Gastrocnemius medialis (tissue), 4 donors: ENCODE measurements at regions of chr2 and their contacts with region 1.

Region 1: GRCh38 chr2:159286709-159287441 is 372 bp upstream of the WDSUB1 start:
- DNase-seq: peak; percentile 95 to 98
- ATAC-seq: peak; percentile 93 to 94
- H3K4me3 ChIP-seq: peak overlapping the region; percentile 83 to 91 (median 88)
- H3K27ac ChIP-seq: peak overlapping the region; percentile 86 to 95 (median 89)
- H3K4me1 ChIP-seq: peaks cover 8 to 10% of the 10 kb centered on the region in 2 donors
- H3K27me3 ChIP-seq: no peaks in the 10 kb centered on the region
- CTCF ChIP-seq: no peak
- POLR2A ChIP-seq: peak; percentile 49 to 65

Region 2: DNA sequence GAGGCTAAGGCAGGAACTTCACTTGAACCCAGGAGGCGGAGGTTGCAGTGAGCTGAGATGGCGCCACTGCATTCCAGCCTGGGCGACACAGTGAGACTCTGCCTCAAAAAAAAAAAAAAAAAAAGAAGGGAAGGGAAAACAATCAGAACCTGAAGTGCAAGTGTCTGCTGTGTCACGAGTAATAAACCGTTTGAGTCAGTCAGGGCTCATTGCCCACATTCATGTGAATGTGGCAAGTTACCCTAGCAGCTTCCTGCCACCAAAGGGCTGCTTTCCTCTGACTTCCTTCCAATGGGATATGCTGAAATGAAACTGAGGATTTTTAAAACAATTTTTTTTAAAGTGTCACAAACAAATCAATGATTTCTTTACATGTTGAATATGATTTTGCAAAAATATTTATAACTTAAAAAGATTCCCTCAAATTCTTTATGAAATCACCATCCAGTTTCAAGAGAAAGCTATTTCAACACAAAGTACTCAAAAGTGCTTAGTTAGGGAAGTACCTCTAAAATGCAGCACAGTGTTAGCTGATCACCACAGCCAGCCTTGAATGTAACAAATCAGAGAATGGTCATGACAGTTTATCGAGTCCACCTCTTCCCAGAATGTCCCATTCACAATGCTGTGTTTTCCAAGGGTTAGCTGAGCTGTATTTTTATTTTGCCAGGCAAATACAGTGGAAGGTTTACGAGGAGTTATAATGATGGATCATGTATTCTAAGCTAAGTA is 36.7 kb before region 1 on chr2:
- in situ Hi-C with region 1: no loop called
- intact Hi-C with region 1: loop called (anchors 5 kb)
- DNase-seq: peak; percentile 65 to 79
- ATAC-seq: peak; percentile 99
- H3K4me3 ChIP-seq: peak overlapping the region in 2 of 4 donors; percentile 18 to 19
- H3K27ac ChIP-seq: peak overlapping the region; percentile 53 to 66 (median 64)
- H3K4me1 ChIP-seq: peaks cover 10 to 17% of the 10 kb centered on the region in 2 donors
- H3K27me3 ChIP-seq: no peaks in the 10 kb centered on the region
- CTCF ChIP-seq: no peak
- POLR2A ChIP-seq: no peak